Activated B cell treated with CpG ODN at 0.5 μM for 24 hours (primary cell): ENCODE measurements at regions of chr17 and their contacts with region 1.

Region 1: DNA sequence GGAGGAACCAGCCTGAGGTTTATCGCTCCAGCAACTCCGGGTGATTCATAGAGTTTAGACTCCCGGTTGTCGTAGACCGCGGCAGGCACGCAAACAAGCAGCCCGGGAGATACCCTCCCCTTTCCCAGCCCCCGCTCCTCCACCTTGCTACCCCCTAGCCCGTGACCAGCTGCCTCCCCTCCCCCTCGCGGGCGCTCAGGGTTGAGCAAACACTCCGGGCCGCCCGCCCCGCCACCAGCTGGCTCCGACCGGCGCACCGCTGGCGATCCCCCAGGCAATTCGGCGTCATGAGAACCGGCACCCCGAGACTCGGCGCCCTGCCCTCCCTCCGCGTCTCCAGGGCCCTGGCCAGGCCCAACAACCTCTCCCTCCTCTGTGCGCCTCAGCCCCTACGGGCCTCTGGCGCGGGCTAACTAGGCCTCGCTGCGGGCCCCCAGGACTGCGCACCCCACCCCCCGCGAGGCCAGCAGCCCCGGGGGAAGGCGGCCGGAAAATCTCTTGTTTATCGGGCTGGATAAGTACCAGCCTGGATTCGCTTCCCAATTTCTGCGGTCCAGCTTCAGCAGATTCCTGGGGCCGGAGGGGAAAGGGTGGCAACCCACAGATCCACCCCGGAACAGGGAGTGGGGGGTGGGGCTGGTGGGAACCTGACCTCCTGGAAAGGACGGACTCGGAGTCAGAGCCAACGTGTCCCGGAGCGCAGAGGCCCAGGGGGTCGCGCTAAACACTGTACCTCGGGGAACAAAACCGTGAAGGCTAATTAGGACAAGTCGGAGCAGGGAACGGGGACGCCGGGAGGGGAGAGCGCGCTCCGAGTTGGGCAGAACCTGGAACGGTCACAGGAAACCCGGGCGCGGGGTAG is 951 bp upstream of the GPRC5C start:
- DNase-seq: peak; percentile 65
- ATAC-seq: peak; percentile 85
- H3K4me3 Mint-ChIP-seq: peak overlapping the region; percentile 73
- H3K27ac Mint-ChIP-seq: peak overlapping the region; percentile 88
- H3K4me1 Mint-ChIP-seq: peaks cover 21% of the 10 kb centered on the region
- H3K27me3 Mint-ChIP-seq: peaks cover 47% of the 10 kb centered on the region
- CTCF ChIP-seq: no peak

Region 2: DNA sequence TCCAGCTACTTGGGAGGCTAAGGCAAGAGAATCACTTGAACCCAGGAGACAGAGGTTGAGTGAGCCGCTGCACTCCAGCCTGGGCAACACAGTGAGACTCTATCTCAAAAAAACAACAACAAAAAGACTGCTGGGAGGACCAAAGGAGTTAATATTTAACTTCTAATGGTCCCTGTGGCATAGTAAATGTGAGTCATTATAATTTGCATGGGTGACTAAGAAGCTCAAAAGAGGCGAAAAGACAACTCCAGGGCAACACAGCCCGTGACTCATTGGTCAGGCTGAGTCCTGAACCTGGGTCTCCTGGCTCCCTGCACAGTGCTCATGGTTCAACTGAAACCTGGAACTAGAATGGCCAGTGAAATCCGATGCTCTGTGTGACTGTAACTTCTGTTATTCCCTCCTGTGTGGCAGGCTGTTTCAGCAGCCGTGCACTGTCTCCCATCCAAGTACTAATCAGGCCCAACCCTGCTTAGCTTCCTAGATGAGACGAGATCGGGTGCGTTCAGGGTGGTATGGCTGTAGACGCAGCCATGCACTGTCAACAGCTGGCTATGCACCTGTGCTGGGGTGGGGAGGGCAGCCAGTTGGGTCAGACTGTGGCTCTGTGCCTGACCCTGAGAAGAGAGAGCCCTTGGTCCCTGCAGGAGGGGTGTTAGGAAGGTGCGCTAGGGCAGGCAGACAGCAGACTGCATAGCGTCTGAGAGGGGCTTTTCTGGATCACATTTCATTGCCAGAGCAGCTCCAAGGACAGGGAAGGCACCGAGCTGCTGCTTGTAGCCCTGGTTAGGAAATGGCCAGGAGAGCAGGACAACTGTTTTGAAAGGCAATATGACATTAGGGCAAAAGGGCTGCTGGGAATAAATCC is 13.5 kb before region 1 on chr17:
- CTCF ChIA-PET with region 1: no interaction called
- POLR2A ChIA-PET with region 1: interaction called, 34 read pairs
- intact Hi-C with region 1: loop called (anchors 1 kb)
- DNase-seq: no peak
- ATAC-seq: peak; percentile 83
- H3K4me3 Mint-ChIP-seq: no peak overlapping the region
- H3K27ac Mint-ChIP-seq: peak overlapping the region; percentile 32
- H3K4me1 Mint-ChIP-seq: peaks cover 25% of the 10 kb centered on the region
- H3K27me3 Mint-ChIP-seq: peaks cover 8% of the 10 kb centered on the region
- CTCF ChIP-seq: no peak

Region 3: DNA sequence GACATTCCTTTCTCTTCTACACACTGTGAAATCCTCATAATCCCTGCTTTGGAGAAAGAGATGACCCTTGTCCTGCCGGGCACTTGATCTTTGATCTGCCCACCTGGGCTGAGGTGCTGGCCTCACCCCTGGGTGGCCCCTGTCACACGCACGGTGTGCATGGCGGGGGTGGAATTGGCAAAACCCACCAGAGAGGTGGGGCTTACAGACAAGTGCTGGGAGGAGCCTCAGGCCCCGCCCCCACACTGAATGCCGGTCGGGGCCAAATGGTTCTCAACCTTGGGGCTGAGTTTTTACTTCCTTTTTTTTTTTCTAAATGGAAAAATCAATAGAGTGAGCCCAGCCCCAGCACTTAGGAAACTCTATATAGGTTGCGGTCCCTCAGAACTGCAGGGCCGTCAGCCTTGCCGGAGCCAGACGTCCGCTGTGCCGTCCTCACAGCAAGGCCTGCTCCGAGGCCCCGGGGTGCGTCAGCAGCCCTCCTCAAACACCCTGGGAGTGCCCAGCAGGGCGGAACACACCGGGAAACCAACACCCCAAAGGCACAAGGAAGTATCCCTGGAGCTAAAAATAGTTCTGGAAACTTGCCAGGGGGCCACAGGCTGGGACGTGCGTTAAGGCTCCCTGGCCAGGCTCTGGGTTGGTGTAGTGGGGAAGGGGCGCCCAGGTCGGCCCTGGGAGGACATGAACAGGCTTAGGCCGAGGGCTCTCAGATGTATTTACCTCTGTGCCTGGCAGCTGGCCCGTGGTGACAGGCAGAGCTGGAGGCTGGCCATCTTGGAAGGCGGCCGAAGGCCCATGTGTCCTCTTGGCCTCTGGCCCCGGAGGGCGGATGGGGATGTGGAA is 12.0 kb after region 1 on chr17:
- CTCF ChIA-PET with region 1: no interaction called
- POLR2A ChIA-PET with region 1: no interaction called
- intact Hi-C with region 1: loop called (anchors 1 kb)
- DNase-seq: peak; percentile 60
- ATAC-seq: peak; percentile 89
- H3K4me3 Mint-ChIP-seq: peak overlapping the region; percentile 63
- H3K27ac Mint-ChIP-seq: peak overlapping the region; percentile 73
- H3K4me1 Mint-ChIP-seq: peaks cover 23% of the 10 kb centered on the region
- H3K27me3 Mint-ChIP-seq: peaks cover 12% of the 10 kb centered on the region
- CTCF ChIP-seq: no peak